ENCODE measurements at regions of chr14 and their contacts with region 1.

Region 1: GRCh38 chr14:51901475-51902024 is 41.1 kb downstream of the GNG2 start:
- DNase-seq: peak; percentile 53
- H3K4me3 Mint-ChIP-seq: no peak overlapping the region
- H3K27ac Mint-ChIP-seq: no peak overlapping the region
- H3K4me1 Mint-ChIP-seq: peaks cover 31% of the 10 kb centered on the region
- H3K27me3 Mint-ChIP-seq: no peaks in the 10 kb centered on the region

Region 2: GRCh38 chr14:51860164-51860824 is 41.3 kb before region 1 on chr14 and contains the start of gene GNG2:
- intact Hi-C with region 1: loop called (anchors 1 kb)
- DNase-seq: peak; percentile 95
- H3K4me3 Mint-ChIP-seq: peak within 1 kb of the TSS; percentile 99
- H3K27ac Mint-ChIP-seq: peak within 1 kb of the TSS; percentile 92
- H3K4me1 Mint-ChIP-seq: peaks cover 51% of the 10 kb centered on the region
- H3K27me3 Mint-ChIP-seq: no peaks in the 10 kb centered on the region
- total RNA-seq, gene GNG2: 104 and 105 TPM in 2 replicates

Region 3: DNA sequence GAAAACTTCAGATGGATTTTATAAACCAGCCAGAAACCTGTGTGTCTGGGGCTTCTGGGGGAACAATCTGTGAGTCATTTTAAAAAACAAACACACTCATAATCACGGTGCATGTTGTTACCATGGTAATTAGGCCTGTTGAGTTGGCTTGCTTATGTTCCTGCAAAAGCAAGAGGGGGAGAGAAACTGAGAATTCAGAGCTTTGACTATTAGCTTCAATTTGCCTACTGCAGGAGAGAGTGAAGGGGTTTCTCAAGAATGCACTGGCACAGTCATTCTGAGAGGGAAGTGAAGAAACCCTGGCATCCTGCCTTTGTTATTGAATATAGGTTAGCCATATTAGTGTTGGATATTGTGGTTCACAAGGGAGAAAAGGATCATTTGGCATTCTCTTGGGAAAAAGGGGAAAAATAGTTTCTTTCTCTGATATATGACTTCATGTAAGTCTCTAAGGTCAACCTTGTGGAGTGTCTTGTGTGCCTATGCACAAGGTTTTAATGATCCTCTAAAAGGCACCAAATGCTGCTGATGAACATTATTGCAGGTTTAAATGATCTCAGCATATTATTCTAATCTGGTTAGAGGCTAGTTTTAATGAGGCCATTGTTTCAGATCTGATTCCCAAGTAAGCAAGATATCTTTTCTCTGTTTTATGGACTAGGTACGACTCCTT is 28.2 kb before region 1 on chr14:
- intact Hi-C with region 1: loop called (anchors 1 kb)
- DNase-seq: peak; percentile 79
- H3K4me3 Mint-ChIP-seq: peak overlapping the region; percentile 53
- H3K27ac Mint-ChIP-seq: peak overlapping the region; percentile 91
- H3K4me1 Mint-ChIP-seq: peaks cover 51% of the 10 kb centered on the region
- H3K27me3 Mint-ChIP-seq: no peaks in the 10 kb centered on the region

Region 4: DNA sequence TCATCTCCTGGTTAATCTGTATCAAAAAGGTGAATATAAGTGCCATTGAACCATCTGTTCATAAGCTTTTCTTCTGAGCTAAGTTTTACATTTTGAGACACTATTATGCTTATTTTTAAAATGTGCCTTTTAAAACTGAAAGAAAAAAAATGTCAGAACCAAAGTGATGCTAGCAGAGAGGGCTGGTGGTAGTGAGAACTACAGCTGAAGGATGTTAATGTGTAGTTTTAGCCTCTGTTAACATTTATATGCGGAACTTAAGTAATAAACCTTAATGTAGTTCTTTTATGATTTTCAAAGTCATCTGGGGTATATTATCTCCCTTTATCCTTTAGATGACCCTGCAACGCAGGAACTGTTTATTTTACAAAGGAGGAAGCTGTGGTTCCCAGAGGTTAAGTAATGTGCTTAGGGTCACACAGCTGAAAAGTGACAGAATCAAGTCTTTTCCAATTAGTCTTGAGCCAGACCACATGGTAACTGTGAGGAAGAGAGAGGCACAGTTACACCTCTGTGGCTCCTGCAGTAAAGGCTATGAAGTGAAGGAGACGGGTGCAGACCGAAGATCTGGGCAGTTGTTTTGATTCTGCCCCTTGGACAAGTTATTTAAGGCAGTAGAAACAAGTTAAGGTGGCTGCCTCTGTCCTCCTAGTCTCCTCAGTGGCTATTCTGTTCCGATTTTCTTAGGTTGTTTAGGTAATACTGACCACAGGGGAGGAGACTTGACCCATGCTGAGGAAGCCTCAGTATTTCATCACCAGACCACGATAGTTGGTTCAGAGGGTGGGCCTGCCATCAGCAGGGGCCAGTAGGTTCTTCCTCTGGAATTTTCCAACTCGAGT is 17.2 kb before region 1 on chr14:
- intact Hi-C with region 1: loop called (anchors 2 kb)
- DNase-seq: peak; percentile 58
- H3K4me3 Mint-ChIP-seq: peak overlapping the region; percentile 51
- H3K27ac Mint-ChIP-seq: peak overlapping the region; percentile 46
- H3K4me1 Mint-ChIP-seq: peaks cover 37% of the 10 kb centered on the region
- H3K27me3 Mint-ChIP-seq: no peaks in the 10 kb centered on the region

Region 5: GRCh38 chr14:51889851-51890250 is 11.7 kb before region 1 on chr14:
- intact Hi-C with region 1: loop called (anchors 2 kb)
- DNase-seq: peak; percentile 49
- H3K4me3 Mint-ChIP-seq: peak overlapping the region; percentile 16
- H3K27ac Mint-ChIP-seq: peak overlapping the region; percentile 35
- H3K4me1 Mint-ChIP-seq: peaks cover 28% of the 10 kb centered on the region
- H3K27me3 Mint-ChIP-seq: no peaks in the 10 kb centered on the region

Measured in activated CD4-positive, alpha-beta T cell treated with anti-CD3 and anti-CD28 coated beads, Interleukin-2, amount 10 ng/mL, durations not matched to agents 24 days and 14 days (primary cell).